Mucosa of descending colon (tissue), 3 donors: ENCODE measurements at regions of chr7 and their contacts with region 1.

Region 1: DNA sequence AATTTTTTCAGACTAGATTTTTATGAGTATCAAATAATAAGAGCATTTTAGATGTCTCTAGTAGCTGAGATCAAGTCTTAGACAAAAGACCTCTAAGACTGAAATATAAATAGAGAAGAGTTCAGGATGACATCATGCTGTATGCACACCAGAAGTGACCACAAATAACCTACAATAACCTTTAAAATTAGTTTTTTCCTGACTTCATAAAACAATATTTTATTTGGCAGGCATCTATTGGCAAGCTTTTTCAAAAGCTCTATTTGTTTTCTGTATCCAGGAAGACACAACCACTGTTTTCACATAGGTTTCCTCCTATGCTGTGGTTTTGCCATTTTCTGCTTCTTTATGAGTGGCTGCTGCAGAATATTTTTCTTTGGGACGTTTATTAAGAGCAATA is 359.1 kb downstream of the CRPPA start:
- DNase-seq: no peak
- ATAC-seq: no peak
- H3K4me3 ChIP-seq: no peak overlapping the region
- H3K4me1 ChIP-seq: no peaks in the 10 kb centered on the region
- CTCF ChIP-seq: no peak

Region 2: GRCh38 chr7:15305002-15305600 is 757.2 kb before region 1 on chr7:
- intact Hi-C with region 1: loop called in 1 of 2 experiments (anchors 10 kb)
- DNase-seq: peak in 1 of 3 donors; percentile 71
- ATAC-seq: peak; percentile 36
- H3K4me3 ChIP-seq: no peak overlapping the region
- H3K4me1 ChIP-seq: no peaks in the 10 kb centered on the region
- CTCF ChIP-seq: no peak